Left ventricle myocardium superior (tissue), 1 donor: ENCODE measurements at regions of chrX and their contacts with region 1.

Region 1: GRCh38 chrX:19909761-19910160 is 22.4 kb upstream of the SH3KBP1 start:
- DNase-seq: no peak
- ATAC-seq: no peak

Region 2: DNA sequence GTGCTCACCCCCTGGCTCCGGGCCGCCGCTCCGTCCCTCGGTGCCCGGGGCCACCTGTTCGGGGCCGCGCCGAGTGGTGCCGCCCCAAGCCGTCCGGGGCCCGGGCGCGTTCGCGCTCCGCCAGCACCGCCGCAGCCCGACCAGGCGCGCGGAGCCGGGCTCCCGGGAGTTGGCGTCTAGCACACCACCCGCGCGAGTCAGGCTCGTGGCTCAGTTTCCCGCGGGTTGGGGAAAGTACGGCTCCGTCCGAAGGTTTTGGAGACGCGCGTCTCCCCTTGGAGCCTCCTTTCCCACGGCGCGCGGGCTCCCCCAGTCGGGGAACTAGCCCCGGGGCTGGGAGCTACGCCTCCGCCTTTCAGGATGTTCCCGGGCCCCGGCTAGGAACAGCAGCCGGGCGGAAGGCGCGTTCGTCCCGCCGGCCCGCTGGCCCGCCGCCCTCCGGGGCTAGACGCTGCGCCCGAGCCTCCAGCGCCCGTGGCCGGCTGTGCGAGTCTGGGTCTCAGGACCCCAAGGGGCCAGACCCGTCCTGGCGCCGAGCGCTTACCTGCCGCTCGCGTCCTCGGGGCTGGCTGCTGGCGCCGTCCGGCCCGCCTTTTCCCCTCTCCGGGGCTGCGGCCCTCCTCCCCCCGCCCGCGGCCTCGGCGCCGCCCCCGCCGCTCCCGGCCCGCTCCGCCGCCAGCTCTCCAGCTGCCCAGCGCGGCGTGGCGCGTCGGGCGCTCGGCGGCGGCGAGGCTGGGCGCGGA is 787.7 kb before region 1 on chrX and contains the start of gene ADGRG2:
- intact Hi-C with region 1: no loop called
- DNase-seq: peak; percentile 60
- ATAC-seq: peak; percentile 84
- total RNA-seq, gene ADGRG2: 0.17 TPM

Region 3: DNA sequence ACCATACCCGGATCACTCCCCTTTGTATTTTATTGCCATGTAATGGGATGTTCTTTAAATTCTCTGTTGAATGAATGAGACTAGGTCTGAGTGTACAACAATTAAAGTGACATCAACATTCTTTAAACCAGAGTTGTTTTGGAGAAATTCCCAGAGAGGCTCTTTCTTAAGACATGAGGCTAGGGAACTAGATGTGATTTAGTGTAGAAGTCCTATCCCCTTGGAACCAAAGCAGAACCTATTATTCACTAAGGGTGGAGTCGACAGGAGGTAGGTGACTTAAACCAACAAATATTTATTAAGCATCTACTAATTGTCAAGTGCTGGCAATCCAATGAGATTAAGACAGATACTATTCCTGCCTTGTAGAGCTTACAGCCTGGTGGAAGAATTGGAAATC is 230.2 kb after region 1 on chrX:
- intact Hi-C with region 1: loop called (anchors 10 kb)
- DNase-seq: no peak
- ATAC-seq: no peak